Heart right ventricle (tissue), 16 donors: ENCODE measurements at regions of chr9 and their contacts with region 1.

Region 1: GRCh38 chr9:71249729-71250317 is 128.4 kb upstream of the TRPM3 start:
- DNase-seq: peak in 1 of 2 donors; percentile 14
- ATAC-seq: peak in 6 of 8 donors; percentile 25 to 71 (median 52)
- H3K4me3 ChIP-seq: no peak overlapping the region
- H3K27ac ChIP-seq: no peak overlapping the region
- H3K4me1 ChIP-seq: peaks cover 0 to 4% (median 0%) of the 10 kb centered on the region in 9 donors
- H3K27me3 ChIP-seq: peaks cover 0 to 22% (median 0%) of the 10 kb centered on the region in 7 donors
- CTCF ChIP-seq: peak; percentile 22 to 85 (median 73)

Region 2: GRCh38 chr9:70639853-70640814 is 609.7 kb before region 1 on chr9:
- intact Hi-C with region 1: loop called in 9 of 10 experiments (anchors 1 to 5 kb)
- DNase-seq: no peak
- ATAC-seq: peak in 6 of 8 donors; percentile 55 to 75 (median 62)
- H3K4me3 ChIP-seq: no peak overlapping the region
- H3K27ac ChIP-seq: no peak overlapping the region
- H3K4me1 ChIP-seq: no peaks in the 10 kb centered on the region
- H3K27me3 ChIP-seq: no peaks in the 10 kb centered on the region
- CTCF ChIP-seq: peak; percentile 32 to 78 (median 68)

Region 3: DNA sequence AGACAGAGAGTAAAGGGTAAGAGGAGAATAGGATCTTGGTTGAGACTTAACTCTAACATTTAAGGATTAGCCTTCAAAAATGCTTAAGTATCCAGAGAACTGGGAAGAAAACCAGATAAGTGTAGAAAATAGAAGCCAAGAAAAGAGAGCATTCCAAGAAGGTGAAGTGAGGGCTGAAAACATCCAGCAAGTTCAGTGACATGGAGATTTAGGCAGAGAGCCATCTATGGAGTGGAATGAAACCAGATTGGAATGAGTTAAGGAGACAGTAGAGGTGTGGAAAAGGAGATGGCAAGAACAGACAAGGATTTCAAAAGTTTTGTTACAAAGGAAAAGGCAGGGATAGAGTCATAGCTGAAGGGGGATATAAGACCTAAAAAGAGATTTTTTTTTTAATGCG is 316.5 kb before region 1 on chr9:
- intact Hi-C with region 1: loop called in 5 of 10 experiments (anchors 5 to 10 kb)
- DNase-seq: no peak
- ATAC-seq: no peak
- H3K4me3 ChIP-seq: no peak overlapping the region
- H3K27ac ChIP-seq: no peak overlapping the region
- H3K4me1 ChIP-seq: no peaks in the 10 kb centered on the region
- H3K27me3 ChIP-seq: no peaks in the 10 kb centered on the region
- CTCF ChIP-seq: no peak

Region 4: DNA sequence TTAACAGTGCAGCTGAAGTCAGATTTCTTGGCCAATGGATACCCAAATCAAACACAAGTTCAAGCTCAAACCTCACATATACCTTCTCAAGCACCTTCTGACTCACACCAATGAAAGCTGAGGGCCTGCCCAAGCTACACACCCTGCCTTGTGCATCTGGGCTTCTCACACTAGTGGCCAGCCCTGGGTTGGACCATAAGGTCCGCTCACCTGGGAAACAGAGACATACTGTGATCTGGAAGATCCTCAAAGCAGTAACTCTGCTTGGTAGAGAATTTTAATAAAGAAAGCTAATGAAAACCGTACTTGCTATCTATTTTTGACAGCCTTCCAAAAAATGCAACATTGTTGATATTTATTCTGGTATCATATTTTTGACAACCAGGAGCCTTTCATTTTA is 121.0 kb before region 1 on chr9:
- intact Hi-C with region 1: no loop called
- DNase-seq: no peak
- ATAC-seq: no peak
- H3K4me3 ChIP-seq: no peak overlapping the region
- H3K27ac ChIP-seq: no peak overlapping the region
- H3K4me1 ChIP-seq: no peaks in the 10 kb centered on the region
- H3K27me3 ChIP-seq: peaks cover 0 to 12% (median 0%) of the 10 kb centered on the region in 7 donors
- CTCF ChIP-seq: no peak

Region 5: GRCh38 chr9:71179183-71179582 is 70.6 kb before region 1 on chr9:
- intact Hi-C with region 1: no loop called
- DNase-seq: no peak
- ATAC-seq: no peak
- H3K4me3 ChIP-seq: no peak overlapping the region
- H3K27ac ChIP-seq: no peak overlapping the region
- H3K4me1 ChIP-seq: no peaks in the 10 kb centered on the region
- H3K27me3 ChIP-seq: no peaks in the 10 kb centered on the region
- CTCF ChIP-seq: no peak

Region 6: DNA sequence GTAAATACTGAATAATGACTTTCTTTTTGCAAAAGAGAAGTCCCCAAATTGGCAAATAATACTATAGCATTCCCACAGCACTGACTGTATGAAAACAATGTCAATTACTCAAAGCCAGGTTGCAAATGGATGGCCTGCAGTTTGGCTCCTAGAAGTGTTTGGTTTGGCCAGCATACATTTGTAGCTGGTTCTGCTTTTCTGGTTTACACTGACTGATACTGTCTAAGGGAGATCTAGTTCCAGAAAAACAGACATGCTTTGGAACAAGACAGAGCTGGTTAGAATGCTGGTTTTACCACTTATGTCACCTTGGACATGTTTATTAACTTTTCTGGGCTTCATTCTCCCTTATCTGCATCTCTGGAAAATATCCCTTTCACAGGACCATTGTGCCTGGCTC is 46.9 kb before region 1 on chr9:
- intact Hi-C with region 1: no loop called
- DNase-seq: no peak
- ATAC-seq: no peak
- H3K4me3 ChIP-seq: no peak overlapping the region
- H3K27ac ChIP-seq: no peak overlapping the region
- H3K4me1 ChIP-seq: no peaks in the 10 kb centered on the region
- H3K27me3 ChIP-seq: no peaks in the 10 kb centered on the region
- CTCF ChIP-seq: no peak

Region 7: GRCh38 chr9:71459082-71459481 is 209.3 kb after region 1 on chr9:
- intact Hi-C with region 1: no loop called
- DNase-seq: no peak
- ATAC-seq: no peak
- H3K4me3 ChIP-seq: no peak overlapping the region
- H3K27ac ChIP-seq: no peak overlapping the region
- H3K4me1 ChIP-seq: no peaks in the 10 kb centered on the region
- H3K27me3 ChIP-seq: peaks cover 0 to 4% (median 0%) of the 10 kb centered on the region in 7 donors
- CTCF ChIP-seq: no peak